T-cell (primary cell): ENCODE measurements at regions of chr2 and their contacts with region 1.

Region 1: DNA sequence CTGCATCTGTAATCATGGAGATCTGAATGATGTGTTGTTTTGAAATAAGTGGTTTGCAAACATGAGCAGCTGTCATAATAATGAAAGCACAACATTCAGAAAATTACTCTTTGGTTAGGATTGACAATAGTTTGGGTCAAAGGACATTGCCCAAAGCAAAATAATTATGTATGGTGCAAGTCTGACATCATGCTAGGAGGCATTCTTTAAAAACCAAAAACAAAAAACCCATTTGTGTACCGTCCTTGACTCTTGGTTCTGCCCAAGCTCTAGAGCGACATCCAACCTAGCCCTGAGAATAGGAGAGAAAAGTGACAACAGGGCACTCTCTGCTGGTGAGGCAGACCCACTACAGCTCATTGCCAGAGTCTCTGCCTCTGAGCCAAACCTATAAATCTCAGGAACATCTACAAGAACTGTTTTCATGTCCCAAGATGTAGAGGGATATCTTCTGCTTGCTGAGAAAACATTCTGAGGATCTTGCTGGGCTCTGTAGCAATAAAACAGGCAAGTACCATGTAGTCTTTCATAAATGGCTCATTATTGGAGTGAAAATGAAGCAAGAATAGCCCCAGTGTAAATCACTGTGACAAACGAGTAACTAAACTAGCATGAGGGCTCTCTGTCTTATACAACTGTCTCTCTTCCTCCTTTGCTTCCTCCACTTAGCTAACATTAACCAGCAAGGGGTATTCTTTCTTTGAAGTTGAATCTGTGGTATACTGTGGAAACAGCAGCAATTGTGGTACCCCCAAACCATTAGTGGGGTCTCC is 266.8 kb upstream of the CXCR4 start:
- DNase-seq: peak in 34 of 35 experiments; percentile 18 to 80 (median 48)
- ATAC-seq: peak; percentile 45 to 85 (median 76)
- H3K4me3 ChIP-seq: no peak overlapping the region
- H3K4me3 Mint-ChIP-seq: peak overlapping the region in 1 of 3 donors; percentile 9
- H3K27ac ChIP-seq: no peak overlapping the region
- H3K27ac Mint-ChIP-seq: peak overlapping the region in 1 of 2 donors; percentile 97
- H3K4me1 ChIP-seq: peaks cover 11 to 14% of the 10 kb centered on the region in 2 experiments
- H3K4me1 Mint-ChIP-seq: peaks cover 38 to 42% (median 39%) of the 10 kb centered on the region in 3 donors
- H3K27me3 ChIP-seq: no peaks in the 10 kb centered on the region
- H3K27me3 Mint-ChIP-seq: no peaks in the 10 kb centered on the region

Region 2: GRCh38 chr2:135876066-135876711 is 508.5 kb before region 1 on chr2 and contains the start of gene MCM6:
- CTCF ChIA-PET with region 1: interaction called, 3 to 6 read pairs
- POLR2A ChIA-PET with region 1: interaction called, 3 to 11 read pairs
- DNase-seq: peak; percentile 93 to 99 (median 96)
- ATAC-seq: peak; percentile 90 to 97 (median 94)
- H3K4me3 ChIP-seq: peak within 1 kb of the TSS; percentile 61 to 93
- H3K4me3 Mint-ChIP-seq: peak within 1 kb of the TSS; percentile 80 to 91 (median 90)
- H3K27ac ChIP-seq: peak within 1 kb of the TSS; percentile 91
- H3K27ac Mint-ChIP-seq: peak within 1 kb of the TSS; percentile 92 to 95
- H3K4me1 ChIP-seq: peaks cover 5 to 22% of the 10 kb centered on the region in 2 experiments
- H3K4me1 Mint-ChIP-seq: peaks cover 36 to 50% (median 48%) of the 10 kb centered on the region in 3 donors
- H3K27me3 ChIP-seq: no peaks in the 10 kb centered on the region
- H3K27me3 Mint-ChIP-seq: no peaks in the 10 kb centered on the region
- total RNA-seq, gene MCM6: 20.8 to 29.2 (median 26.1) TPM

Region 3: GRCh38 chr2:135913727-135914365 is 470.9 kb before region 1 on chr2:
- CTCF ChIA-PET with region 1: interaction called, 104 to 287 read pairs
- POLR2A ChIA-PET with region 1: interaction called, 3 to 5 read pairs
- DNase-seq: peak in 19 of 35 experiments; percentile 14 to 83 (median 43)
- ATAC-seq: peak in 3 of 4 experiments; percentile 47 to 56 (median 49)
- H3K4me3 ChIP-seq: no peak overlapping the region
- H3K4me3 Mint-ChIP-seq: no peak overlapping the region
- H3K27ac ChIP-seq: no peak overlapping the region
- H3K27ac Mint-ChIP-seq: peak overlapping the region in 1 of 2 donors; percentile 52
- H3K4me1 ChIP-seq: no peaks in the 10 kb centered on the region
- H3K4me1 Mint-ChIP-seq: peaks cover 0 to 10% (median 10%) of the 10 kb centered on the region in 3 donors
- H3K27me3 ChIP-seq: no peaks in the 10 kb centered on the region
- H3K27me3 Mint-ChIP-seq: no peaks in the 10 kb centered on the region

Region 4: DNA sequence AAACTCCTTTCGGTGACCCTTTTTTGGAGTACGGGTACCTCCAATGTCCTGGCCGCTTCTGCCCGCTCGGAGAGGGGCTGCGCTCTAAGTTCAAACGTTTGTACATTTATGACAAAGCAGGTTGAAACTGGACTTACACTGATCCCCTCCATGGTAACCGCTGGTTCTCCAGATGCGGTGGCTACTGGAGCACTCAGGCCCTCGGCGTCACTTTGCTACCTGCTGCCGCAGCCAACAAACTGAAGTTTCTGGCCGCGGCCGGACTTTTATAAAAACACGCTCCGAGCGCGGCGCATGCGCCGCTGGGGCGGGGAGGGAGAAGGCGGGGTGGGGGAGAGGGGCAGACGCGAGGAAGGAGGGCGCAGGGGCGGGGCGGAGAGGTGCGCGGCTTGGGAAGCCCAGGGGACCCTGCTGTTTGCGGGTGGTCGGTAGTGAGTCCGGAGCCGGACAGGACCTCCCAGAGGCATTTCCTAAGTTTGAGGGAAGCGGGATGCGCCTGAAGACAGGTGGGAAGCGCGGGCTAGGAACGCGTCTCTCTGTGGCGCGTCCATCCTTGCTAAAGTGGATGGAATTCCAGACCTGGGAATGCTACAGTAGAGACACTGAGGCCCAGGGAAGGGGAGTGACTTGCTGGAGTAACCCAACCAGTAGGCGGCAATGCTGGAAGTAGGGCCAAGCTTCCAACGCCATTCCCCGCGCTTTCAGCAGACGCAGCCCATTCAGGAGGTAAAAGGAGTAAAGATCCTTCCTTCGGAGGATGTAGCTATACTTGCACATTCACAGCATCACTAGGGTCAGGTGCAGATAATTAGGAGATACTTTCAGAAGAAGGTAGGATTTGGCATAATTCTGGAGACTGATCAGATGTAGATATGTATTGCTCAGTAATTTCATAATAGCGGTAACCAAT is 266.6 kb before region 1 on chr2 and contains the start of gene CXCR4:
- CTCF ChIA-PET with region 1: interaction called in 1 of 2 experiments, 10 read pairs
- POLR2A ChIA-PET with region 1: interaction called, 5 read pairs
- DNase-seq: peak; percentile 82 to 98 (median 92)
- ATAC-seq: peak; percentile 34 to 54 (median 52)
- H3K4me3 ChIP-seq: peak within 1 kb of the TSS; percentile 89 to 100
- H3K4me3 Mint-ChIP-seq: peak within 1 kb of the TSS; percentile 94 to 99 (median 99)
- H3K27ac ChIP-seq: peak within 1 kb of the TSS; percentile 99
- H3K27ac Mint-ChIP-seq: peak within 1 kb of the TSS; percentile 96 to 97
- H3K4me1 ChIP-seq: peaks cover 26 to 37% of the 10 kb centered on the region in 2 experiments
- H3K4me1 Mint-ChIP-seq: peaks cover 65 to 73% (median 66%) of the 10 kb centered on the region in 3 donors
- H3K27me3 ChIP-seq: no peaks in the 10 kb centered on the region
- H3K27me3 Mint-ChIP-seq: no peaks in the 10 kb centered on the region
- total RNA-seq, gene CXCR4: 274 to 1,514 (median 326) TPM

Region 5: GRCh38 chr2:136517716-136518115 is 133.0 kb after region 1 on chr2:
- CTCF ChIA-PET with region 1: no interaction called
- POLR2A ChIA-PET with region 1: no interaction called
- DNase-seq: no peak
- ATAC-seq: no peak
- H3K4me3 ChIP-seq: no peak overlapping the region
- H3K4me3 Mint-ChIP-seq: no peak overlapping the region
- H3K27ac ChIP-seq: no peak overlapping the region
- H3K27ac Mint-ChIP-seq: no peak overlapping the region
- H3K4me1 ChIP-seq: no peaks in the 10 kb centered on the region
- H3K4me1 Mint-ChIP-seq: no peaks in the 10 kb centered on the region
- H3K27me3 ChIP-seq: peaks cover 0 to 10% of the 10 kb centered on the region in 2 experiments
- H3K27me3 Mint-ChIP-seq: peaks cover 19 to 25% of the 10 kb centered on the region in 2 donors

Region 6: DNA sequence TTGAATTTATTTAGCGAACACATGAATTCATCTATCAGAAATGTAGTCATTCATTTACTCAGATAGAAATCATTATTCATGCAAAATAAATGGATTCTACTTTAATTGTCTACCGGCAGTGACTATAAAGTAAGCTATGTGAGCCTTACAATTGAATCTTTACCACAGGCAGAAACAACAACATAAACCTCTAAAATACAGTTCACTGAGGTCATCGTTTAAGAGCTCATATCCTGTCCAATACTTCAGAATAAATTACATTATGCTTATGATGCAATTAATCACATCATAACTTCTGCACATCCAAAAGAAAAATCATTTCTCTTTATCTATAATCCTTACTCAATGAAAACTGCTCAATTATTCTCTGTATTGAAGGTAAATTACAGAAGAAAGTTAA is 1824.3 kb after region 1 on chr2:
- CTCF ChIA-PET with region 1: no interaction called
- POLR2A ChIA-PET with region 1: no interaction called
- DNase-seq: no peak
- ATAC-seq: no peak
- H3K4me3 ChIP-seq: no peak overlapping the region
- H3K4me3 Mint-ChIP-seq: no peak overlapping the region
- H3K27ac ChIP-seq: no peak overlapping the region
- H3K27ac Mint-ChIP-seq: no peak overlapping the region
- H3K4me1 ChIP-seq: no peaks in the 10 kb centered on the region
- H3K4me1 Mint-ChIP-seq: no peaks in the 10 kb centered on the region
- H3K27me3 ChIP-seq: no peaks in the 10 kb centered on the region
- H3K27me3 Mint-ChIP-seq: no peaks in the 10 kb centered on the region